Colonic mucosa (tissue), 4 donors: ENCODE measurements at regions of chr4 and their contacts with region 1.

Region 1: GRCh38 chr4:107760281-107760947 is 40.4 kb upstream of the PAPSS1 start:
- DNase-seq: peak; percentile 53
- H3K4me3 ChIP-seq: no peak overlapping the region
- H3K27ac ChIP-seq: no peak overlapping the region
- H3K4me1 ChIP-seq: no peaks in the 10 kb centered on the region
- H3K27me3 ChIP-seq: no peaks in the 10 kb centered on the region
- CTCF ChIP-seq: peak; percentile 37

Region 2: GRCh38 chr4:107838861-107839565 is 78.6 kb after region 1 on chr4:
- intact Hi-C with region 1: loop called (anchors 10 kb)
- DNase-seq: no peak
- H3K4me3 ChIP-seq: no peak overlapping the region
- H3K27ac ChIP-seq: no peak overlapping the region
- H3K4me1 ChIP-seq: no peaks in the 10 kb centered on the region
- H3K27me3 ChIP-seq: no peaks in the 10 kb centered on the region
- CTCF ChIP-seq: no peak

Region 3: DNA sequence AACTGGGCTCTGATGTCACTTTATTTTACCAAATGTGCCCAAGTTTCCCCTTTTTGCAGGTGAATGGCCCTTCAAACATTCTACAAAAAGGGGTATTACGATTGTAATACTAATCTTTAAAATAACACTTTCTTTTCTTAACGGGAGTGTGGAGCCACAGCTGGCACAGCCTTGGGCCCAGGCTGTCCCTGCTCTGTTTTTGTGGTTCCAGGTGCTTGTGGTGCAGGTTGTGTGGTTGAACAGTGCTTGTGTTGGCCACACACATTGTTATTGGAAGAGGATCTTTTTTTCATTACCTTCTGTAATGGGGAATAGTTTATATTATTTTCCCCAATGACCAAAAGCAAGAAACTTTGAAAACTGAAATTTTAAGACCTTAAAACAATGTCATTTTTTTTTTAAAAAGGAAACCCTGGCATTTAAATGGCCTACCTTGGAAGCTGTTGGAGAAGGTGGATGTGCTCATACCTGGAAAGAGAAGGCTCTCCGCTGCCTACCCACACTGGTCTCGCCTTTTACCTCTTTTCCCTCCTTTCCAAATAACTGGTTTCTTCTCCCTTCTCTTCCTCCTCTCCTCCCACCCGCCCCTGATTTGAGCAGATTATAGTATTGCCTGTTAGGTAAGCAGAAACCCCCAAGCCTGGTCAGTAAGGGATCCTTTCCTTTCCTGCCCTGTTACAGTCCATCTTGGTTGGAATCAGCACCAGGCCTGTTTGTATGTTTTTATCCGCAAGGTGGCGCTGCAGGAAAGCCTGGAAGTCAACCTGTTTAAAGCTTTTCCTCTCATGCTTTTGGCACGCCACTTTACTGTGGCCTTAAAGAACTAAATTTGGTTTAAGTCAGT is 257.8 kb after region 1 on chr4:
- intact Hi-C with region 1: no loop called
- DNase-seq: peak; percentile 87
- H3K4me3 ChIP-seq: no peak overlapping the region
- H3K27ac ChIP-seq: no peak overlapping the region
- H3K4me1 ChIP-seq: no peaks in the 10 kb centered on the region
- H3K27me3 ChIP-seq: no peaks in the 10 kb centered on the region
- CTCF ChIP-seq: peak; percentile 76